Activated CD4-positive, alpha-beta memory T cell treated with anti-CD3 and anti-CD28 coated beads for 36 hours (primary cell): ENCODE measurements at regions of chr22 and their contacts with region 1.

Region 1: DNA sequence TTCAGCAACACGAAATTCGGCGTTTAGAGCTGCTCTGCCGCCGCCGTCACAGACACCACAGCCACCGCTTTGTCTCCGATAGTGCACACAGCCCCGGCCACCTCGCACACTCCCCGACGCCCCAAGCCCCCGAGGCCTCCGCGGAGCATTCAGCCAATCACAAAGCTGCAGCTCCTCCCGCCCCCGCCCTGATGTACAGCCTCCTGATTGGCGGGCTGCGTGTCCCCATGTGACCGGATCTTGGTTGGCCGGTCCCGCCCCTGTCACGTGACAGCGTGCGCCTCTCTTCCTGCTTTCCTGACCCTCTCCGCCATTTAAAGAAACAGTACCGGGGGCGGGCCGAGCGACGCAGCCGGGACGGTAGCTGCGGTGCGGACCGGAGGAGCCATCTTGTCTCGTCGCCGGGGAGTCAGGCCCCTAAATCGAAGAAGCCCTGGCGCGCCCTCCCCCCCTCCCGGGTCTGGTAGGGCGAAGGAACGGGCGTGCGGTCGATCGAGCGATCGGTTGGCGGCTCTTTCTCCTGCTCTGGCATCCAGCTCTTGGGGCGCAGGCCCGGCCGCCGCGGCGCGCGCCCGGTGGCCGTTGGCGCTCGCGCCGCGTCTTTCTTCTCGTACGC is at the start of gene TUG1:
- DNase-seq: peak; percentile 98
- H3K4me3 Mint-ChIP-seq: peak within 1 kb of the TSS; percentile 85
- H3K27ac Mint-ChIP-seq: peak within 1 kb of the TSS; percentile 89
- H3K4me1 Mint-ChIP-seq: peaks cover 64% of the 10 kb centered on the region
- H3K27me3 Mint-ChIP-seq: peaks cover 1% of the 10 kb centered on the region
- total RNA-seq, gene TUG1: 35.6 to 38.3 TPM

Region 2: GRCh38 chr22:30591588-30592359 is 377.3 kb before region 1 on chr22 and contains the start of gene PES1:
- CTCF ChIA-PET with region 1: no interaction called
- POLR2A ChIA-PET with region 1: interaction called, 3 read pairs
- intact Hi-C with region 1: loop called (anchors 1 kb)
- DNase-seq: peak; percentile 96
- H3K4me3 Mint-ChIP-seq: no peak within 1 kb of the TSS
- H3K27ac Mint-ChIP-seq: no peak within 1 kb of the TSS
- H3K4me1 Mint-ChIP-seq: peaks cover 4% of the 10 kb centered on the region
- H3K27me3 Mint-ChIP-seq: peaks cover 7% of the 10 kb centered on the region
- total RNA-seq, gene PES1: 99.3 to 99.6 TPM

Region 3: GRCh38 chr22:30920407-30920806 is 48.6 kb before region 1 on chr22:
- CTCF ChIA-PET with region 1: interaction called, 12 read pairs
- POLR2A ChIA-PET with region 1: interaction called, 3 read pairs
- intact Hi-C with region 1: no loop called
- DNase-seq: peak; percentile 87
- H3K4me3 Mint-ChIP-seq: peak overlapping the region; percentile 40
- H3K27ac Mint-ChIP-seq: peak overlapping the region; percentile 3
- H3K4me1 Mint-ChIP-seq: peaks cover 12% of the 10 kb centered on the region
- H3K27me3 Mint-ChIP-seq: no peaks in the 10 kb centered on the region

Region 4: GRCh38 chr22:30940685-30941362 is 28.2 kb before region 1 on chr22:
- CTCF ChIA-PET with region 1: interaction called, 6 read pairs
- POLR2A ChIA-PET with region 1: interaction called, 14 read pairs
- intact Hi-C with region 1: no loop called
- DNase-seq: peak; percentile 70
- H3K4me3 Mint-ChIP-seq: peak overlapping the region; percentile 61
- H3K27ac Mint-ChIP-seq: peak overlapping the region; percentile 89
- H3K4me1 Mint-ChIP-seq: peaks cover 72% of the 10 kb centered on the region
- H3K27me3 Mint-ChIP-seq: no peaks in the 10 kb centered on the region

Region 5: GRCh38 chr22:31005535-31005934 is 36.5 kb after region 1 on chr22:
- CTCF ChIA-PET with region 1: no interaction called
- POLR2A ChIA-PET with region 1: no interaction called
- intact Hi-C with region 1: no loop called
- DNase-seq: no peak
- H3K4me3 Mint-ChIP-seq: no peak overlapping the region
- H3K27ac Mint-ChIP-seq: no peak overlapping the region
- H3K4me1 Mint-ChIP-seq: no peaks in the 10 kb centered on the region
- H3K27me3 Mint-ChIP-seq: peaks cover 5% of the 10 kb centered on the region

Region 6: GRCh38 chr22:31029276-31029675 is 60.2 kb after region 1 on chr22:
- CTCF ChIA-PET with region 1: no interaction called
- POLR2A ChIA-PET with region 1: no interaction called
- intact Hi-C with region 1: no loop called
- DNase-seq: no peak
- H3K4me3 Mint-ChIP-seq: no peak overlapping the region
- H3K27ac Mint-ChIP-seq: no peak overlapping the region
- H3K4me1 Mint-ChIP-seq: no peaks in the 10 kb centered on the region
- H3K27me3 Mint-ChIP-seq: peaks cover 4% of the 10 kb centered on the region

Region 7: DNA sequence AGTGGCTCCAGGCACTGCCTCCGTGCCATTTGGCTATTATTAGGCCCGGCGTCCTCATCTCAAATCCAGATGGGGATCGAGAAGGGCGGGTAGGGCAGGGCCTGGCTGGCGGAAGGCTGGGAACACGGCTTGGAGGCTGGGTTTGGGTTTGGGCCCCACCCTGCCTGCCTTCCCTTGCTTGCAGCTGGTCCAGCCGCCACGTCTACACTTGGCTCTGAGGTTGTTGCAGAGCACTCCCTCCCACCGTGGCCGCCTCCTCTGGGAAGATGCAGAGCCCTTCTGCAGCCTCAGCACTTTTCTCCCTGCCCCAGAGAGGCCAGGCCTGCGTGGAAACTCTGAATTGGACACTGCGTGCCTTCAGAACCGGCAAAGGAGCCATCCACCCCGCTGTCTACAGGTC is 106.9 kb after region 1 on chr22:
- CTCF ChIA-PET with region 1: no interaction called
- POLR2A ChIA-PET with region 1: no interaction called
- intact Hi-C with region 1: no loop called
- DNase-seq: no peak
- H3K4me3 Mint-ChIP-seq: no peak overlapping the region
- H3K27ac Mint-ChIP-seq: no peak overlapping the region
- H3K4me1 Mint-ChIP-seq: peaks cover 5% of the 10 kb centered on the region
- H3K27me3 Mint-ChIP-seq: no peaks in the 10 kb centered on the region

Region 8: GRCh38 chr22:31345331-31346254 is 376.6 kb after region 1 on chr22:
- CTCF ChIA-PET with region 1: no interaction called
- POLR2A ChIA-PET with region 1: no interaction called
- intact Hi-C with region 1: loop called (anchors 5 kb)
- DNase-seq: peak; percentile 91
- H3K4me3 Mint-ChIP-seq: peak overlapping the region; percentile 89
- H3K27ac Mint-ChIP-seq: peak overlapping the region; percentile 91
- H3K4me1 Mint-ChIP-seq: peaks cover 46% of the 10 kb centered on the region
- H3K27me3 Mint-ChIP-seq: no peaks in the 10 kb centered on the region

Region 9: GRCh38 chr22:31465307-31465706 is 496.3 kb after region 1 on chr22:
- CTCF ChIA-PET with region 1: no interaction called
- POLR2A ChIA-PET with region 1: no interaction called
- intact Hi-C with region 1: no loop called
- DNase-seq: no peak
- H3K4me3 Mint-ChIP-seq: no peak overlapping the region
- H3K27ac Mint-ChIP-seq: no peak overlapping the region
- H3K4me1 Mint-ChIP-seq: no peaks in the 10 kb centered on the region
- H3K27me3 Mint-ChIP-seq: no peaks in the 10 kb centered on the region